Dorsolateral prefrontal cortex (tissue), 120 donors: ENCODE measurements at regions of chr1 and their contacts with region 1.

Region 1: GRCh38 chr1:6287431-6287886 is 26.6 kb upstream of the GPR153 start:
- DNase-seq: peak in 9 of 10 donors; percentile 42 to 84 (median 64)
- H3K4me3 ChIP-seq: no peak overlapping the region
- H3K27ac ChIP-seq: peak overlapping the region in 11 of 59 donors; percentile 10 to 93 (median 50)
- H3K27me3 ChIP-seq: no peaks in the 10 kb centered on the region
- CTCF ChIP-seq: no peak

Region 2: DNA sequence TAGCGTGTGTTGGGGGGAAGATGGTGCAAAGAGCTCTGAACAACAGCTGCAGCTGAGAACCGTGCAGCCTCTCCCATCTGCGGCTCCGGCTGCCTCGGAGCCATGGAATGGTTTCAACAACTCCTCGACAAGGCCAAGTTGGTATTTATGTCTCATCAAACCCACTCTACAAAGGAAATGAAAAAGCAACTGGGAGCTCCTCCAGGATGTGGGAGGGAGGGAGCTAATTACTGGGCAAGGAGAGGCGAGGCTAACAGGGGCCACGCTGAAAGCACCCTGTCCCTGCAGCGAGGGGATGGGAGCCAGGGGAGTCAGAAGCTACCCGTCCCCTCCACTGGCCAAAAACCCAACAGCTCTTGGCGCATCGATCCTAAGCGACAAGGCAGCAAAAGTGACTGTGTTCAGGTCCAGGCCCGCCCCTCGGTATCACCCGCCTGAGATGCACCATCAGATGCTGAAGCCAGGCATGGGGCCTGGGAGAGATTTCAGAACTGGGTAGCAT is 43.0 kb after region 1 on chr1:
- intact Hi-C with region 1: loop called in 1 of 2 experiments (anchors 2 kb)
- DNase-seq: peak in 9 of 10 donors; percentile 36 to 79 (median 72)
- H3K4me3 ChIP-seq: no peak overlapping the region
- H3K27ac ChIP-seq: peak overlapping the region in 42 of 59 donors; percentile 1 to 84 (median 56)
- H3K27me3 ChIP-seq: no peaks in the 10 kb centered on the region
- CTCF ChIP-seq: no peak